ENCODE measurements at regions of chr19 and their contacts with region 1.

Region 1: DNA sequence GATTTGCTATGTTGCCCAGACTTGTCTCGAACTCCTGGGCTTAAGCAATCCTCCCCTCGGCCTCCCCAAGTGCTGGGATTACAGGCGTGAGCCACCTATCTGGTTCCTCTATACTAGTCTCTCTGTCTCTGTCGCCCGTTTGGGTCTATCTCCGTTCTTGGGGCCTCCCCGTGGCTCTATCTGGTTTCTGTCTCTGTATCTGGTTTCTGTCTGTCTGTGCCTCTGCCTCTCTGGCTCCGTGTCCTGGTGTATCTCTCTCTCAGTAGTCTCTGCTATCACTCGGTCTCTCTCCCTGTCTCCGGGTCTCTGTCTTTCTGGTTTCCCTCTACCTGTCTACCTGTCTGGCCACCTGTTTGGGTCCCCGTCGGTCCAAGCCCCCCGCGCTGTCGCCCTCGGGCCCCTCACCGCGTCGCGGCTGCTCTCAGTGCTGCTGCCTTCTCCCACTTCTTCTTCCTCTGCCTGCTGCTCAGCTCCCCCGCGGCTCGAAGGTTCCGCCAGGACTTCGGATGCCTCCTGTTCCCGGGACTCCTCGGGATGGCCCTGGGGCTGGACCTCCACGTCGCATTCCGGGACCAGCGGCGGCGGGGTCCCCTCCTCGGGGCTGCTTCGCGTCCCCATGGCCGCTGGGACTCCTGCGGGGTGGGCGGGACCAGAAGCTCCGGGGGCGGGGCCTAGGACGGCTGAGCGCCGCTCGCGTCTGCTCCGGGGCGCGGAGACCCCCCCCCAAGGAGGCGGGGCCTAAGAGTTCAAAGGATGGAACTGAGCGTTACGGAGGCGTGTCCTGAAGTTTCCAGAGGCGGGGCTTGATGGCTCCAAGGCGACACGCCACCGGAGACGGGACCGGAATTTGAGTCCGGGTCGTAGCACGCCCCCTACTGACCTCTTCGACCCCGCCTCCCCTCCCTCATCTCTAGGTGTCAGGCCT is 783 bp downstream of the PHLDB3 start:
- H3K4me3 ChIP-seq: peak overlapping the region; percentile 78
- H3K27ac ChIP-seq: peak overlapping the region; percentile 77
- H3K4me1 ChIP-seq: peaks cover 15% of the 10 kb centered on the region; the same call in 1 of the 2 replicates
- CTCF ChIP-seq: peak; percentile 96

Region 2: DNA sequence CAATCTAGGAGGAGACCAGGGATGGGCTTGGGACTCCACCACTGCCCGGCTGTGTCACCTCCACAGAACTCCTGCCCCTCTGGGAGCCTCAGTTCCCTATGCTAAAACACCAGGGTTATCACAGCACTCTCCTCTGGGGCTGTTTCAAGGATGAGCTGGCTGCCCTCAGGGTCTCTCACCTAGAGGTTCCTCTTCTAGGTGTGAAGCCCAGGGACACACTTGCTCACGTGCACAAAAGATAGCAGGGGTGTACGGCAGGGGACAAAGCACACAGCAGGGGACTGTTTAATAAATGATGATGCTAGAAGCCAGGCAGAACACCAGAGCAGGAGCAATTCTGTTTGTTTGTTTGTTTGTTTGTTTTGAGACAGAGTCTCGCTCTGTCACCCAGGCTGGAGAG is 21.6 kb before region 1 on chr19:
- CTCF ChIA-PET with region 1: interaction called, 3 read pairs
- POLR2A ChIA-PET with region 1: interaction called, 11 read pairs
- H3K4me3 ChIP-seq: no peak overlapping the region
- H3K27ac ChIP-seq: no peak overlapping the region
- H3K4me1 ChIP-seq: no peaks in the 10 kb centered on the region
- CTCF ChIP-seq: no peak

Region 3: DNA sequence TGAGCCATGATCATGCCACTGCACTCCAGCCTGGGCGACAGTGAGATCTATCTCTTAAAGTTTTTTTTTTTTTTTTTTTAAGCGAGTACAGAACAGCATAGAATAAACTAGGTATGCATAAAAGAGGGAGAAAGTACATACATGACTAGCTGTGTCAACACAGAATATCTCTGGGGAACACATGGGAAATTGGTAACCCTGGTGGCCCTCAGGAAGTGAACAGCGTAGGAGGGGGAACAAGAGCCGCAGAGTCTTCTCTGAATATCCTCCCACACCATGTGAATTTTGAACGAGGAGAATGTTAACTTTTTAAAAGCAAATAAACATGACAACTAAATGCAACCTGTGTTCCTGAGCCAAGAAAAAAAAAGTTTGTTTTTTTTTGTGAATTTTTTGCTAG is 14.5 kb before region 1 on chr19:
- CTCF ChIA-PET with region 1: interaction called, 5 read pairs
- POLR2A ChIA-PET with region 1: interaction called, 10 read pairs
- H3K4me3 ChIP-seq: no peak overlapping the region
- H3K27ac ChIP-seq: no peak overlapping the region
- H3K4me1 ChIP-seq: no peaks in the 10 kb centered on the region
- CTCF ChIP-seq: no peak

Region 4: GRCh38 chr19:43526884-43527859 is 23.4 kb after region 1 on chr19 and contains the start of gene ETHE1:
- CTCF ChIA-PET with region 1: interaction called, 5 read pairs
- POLR2A ChIA-PET with region 1: interaction called, 10 read pairs
- H3K4me3 ChIP-seq: peak within 1 kb of the TSS; percentile 60
- H3K27ac ChIP-seq: peak within 1 kb of the TSS; percentile 64; the same call in 1 of the 2 replicates
- H3K4me1 ChIP-seq: peaks cover 30% of the 10 kb centered on the region
- CTCF ChIP-seq: peak; percentile 79

Measured in HEK293 (cell line).